AG04450 (cell line): ENCODE measurements at regions of chr5 and their contacts with region 1.

Region 1: DNA sequence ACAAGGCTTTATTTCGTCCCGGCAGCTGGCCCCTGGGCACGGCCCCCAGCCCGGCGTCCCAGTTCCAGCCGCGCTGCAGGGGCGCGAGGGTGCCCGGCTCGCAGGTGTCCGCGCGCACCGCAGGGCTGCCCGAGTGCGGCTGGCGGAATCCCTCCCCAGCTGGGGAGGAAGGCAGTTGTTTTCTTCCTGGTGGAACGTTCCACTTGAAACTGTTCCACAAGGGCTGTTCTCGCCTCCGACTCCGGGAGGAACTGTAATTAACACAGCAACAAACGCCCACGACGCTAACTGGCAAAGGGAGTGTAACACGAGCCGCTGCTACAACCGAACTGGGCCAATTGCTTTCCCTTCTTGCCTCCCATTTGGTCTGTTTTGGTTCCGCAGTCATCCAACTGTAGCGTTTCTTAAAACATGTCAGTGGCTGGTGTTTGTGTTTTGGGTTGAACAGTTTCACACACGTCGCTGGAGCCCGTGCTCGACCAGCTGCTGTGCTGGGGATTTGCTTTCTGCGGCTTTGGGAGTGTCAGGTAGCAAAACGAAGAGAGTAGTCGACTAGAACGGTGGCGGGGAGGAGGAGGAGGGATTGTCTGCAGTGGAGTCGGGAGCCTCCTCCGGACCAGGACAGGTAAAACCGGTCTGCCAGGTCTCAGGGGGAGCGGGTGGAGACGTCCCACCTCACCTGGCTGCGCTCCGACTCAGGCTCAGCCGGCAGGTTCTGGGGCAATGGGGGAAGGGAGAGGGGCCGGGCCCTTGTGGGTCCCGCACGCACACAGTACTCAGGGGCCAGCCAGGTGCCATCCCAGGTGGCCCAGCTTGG is 131.6 kb upstream of the NIPBL start:
- DNase-seq: no peak
- H3K4me3 ChIP-seq: peak overlapping the region; percentile 65
- H3K27ac ChIP-seq: no peak overlapping the region
- H3K27me3 ChIP-seq: peaks cover 25% of the 10 kb centered on the region
- CTCF ChIP-seq: no peak; the same call in 1 of the 2 replicates

Region 2: DNA sequence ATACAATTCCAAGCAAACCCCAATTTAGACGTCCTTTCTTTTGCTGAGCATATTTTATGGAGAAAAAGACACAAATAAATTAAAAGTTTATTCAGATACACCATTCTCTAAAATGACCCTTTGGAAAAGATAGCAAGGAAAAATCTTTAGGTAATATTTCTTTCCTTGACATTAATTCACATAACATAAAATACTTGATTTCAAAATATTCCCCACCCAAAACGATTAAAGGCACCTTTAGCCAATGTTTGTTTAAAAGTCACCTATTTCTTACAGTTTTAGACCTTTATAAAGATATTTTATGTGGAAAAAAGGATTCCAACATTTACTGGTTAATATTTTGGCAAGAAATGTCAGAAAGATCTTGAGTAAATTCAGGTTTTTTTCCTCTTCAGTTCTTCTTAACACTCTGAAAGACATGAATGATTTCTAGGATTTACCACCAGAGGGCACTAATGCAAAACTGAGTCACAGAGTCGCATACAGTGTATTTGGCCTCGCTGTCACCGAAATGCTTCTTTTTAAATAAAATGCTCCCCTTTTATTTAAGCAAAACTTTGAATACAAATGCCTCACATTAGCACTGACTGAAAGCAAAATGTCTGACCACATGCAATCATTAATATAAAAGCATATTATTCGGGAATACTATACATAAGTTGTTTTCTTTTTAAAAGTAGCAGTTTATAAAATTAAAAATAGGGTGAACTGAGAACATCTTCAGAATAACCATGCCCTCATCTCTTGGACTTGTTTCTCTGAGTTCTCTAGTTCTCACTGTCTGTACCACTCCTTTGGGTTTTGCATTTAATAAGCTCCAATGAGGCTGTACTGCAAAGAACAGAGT is 16.1 kb before region 1 on chr5:
- CTCF ChIA-PET with region 1: interaction called, 28 read pairs
- POLR2A ChIA-PET with region 1: no interaction called
- DNase-seq: peak; percentile 41
- H3K4me3 ChIP-seq: no peak overlapping the region
- H3K27ac ChIP-seq: no peak overlapping the region
- H3K27me3 ChIP-seq: peaks cover 3% of the 10 kb centered on the region
- CTCF ChIP-seq: peak; percentile 71

Region 3: GRCh38 chr5:36870399-36871040 is 125.5 kb after region 1 on chr5:
- CTCF ChIA-PET with region 1: interaction called, 12 read pairs
- POLR2A ChIA-PET with region 1: no interaction called
- DNase-seq: no peak
- H3K4me3 ChIP-seq: no peak overlapping the region
- H3K27ac ChIP-seq: no peak overlapping the region
- H3K27me3 ChIP-seq: no peaks in the 10 kb centered on the region
- CTCF ChIP-seq: peak; percentile 70

Region 4: DNA sequence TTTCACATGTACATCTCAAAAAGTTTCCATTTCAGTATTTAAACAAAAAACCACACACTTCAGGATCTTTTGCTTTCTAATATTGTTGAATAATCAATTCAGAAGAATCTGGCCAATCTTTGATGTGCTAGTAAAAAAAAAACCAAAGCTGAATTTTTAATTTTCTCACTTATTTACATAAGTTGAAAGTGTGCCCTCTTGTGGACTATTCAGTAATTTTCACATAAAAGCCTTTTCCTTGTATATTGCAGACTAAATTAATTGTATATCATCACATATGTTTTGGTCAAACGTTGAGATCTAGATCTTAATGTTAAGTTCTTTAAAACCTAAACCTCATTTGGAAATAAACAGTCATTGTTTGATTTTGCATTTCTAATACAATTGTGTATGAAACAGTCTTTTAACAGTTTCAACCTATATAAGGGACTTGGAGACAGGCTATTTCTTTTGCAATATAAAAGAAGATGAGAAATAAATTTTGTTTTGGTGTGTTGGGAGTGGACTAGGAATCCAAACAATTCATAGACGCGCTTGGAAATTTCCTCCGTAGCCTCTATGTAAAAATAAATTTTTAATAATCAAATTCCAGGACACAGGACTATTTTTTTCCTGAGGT is 199.7 kb after region 1 on chr5:
- CTCF ChIA-PET with region 1: interaction called, 11 read pairs
- POLR2A ChIA-PET with region 1: no interaction called
- DNase-seq: peak; percentile 24
- H3K4me3 ChIP-seq: no peak overlapping the region
- H3K27ac ChIP-seq: no peak overlapping the region
- H3K27me3 ChIP-seq: no peaks in the 10 kb centered on the region
- CTCF ChIP-seq: peak; percentile 51

Region 5: GRCh38 chr5:36965179-36965578 is 220.2 kb after region 1 on chr5:
- CTCF ChIA-PET with region 1: no interaction called
- POLR2A ChIA-PET with region 1: no interaction called
- DNase-seq: no peak
- H3K4me3 ChIP-seq: no peak overlapping the region
- H3K27ac ChIP-seq: no peak overlapping the region
- H3K27me3 ChIP-seq: no peaks in the 10 kb centered on the region
- CTCF ChIP-seq: no peak